Right ventricle myocardium inferior (tissue), 1 donor: ENCODE measurements at regions of chr6 and their contacts with region 1.

Region 1: GRCh38 chr6:109382576-109383437 is 540 bp upstream of the CD164 start:
- DNase-seq: peak; percentile 98
- ATAC-seq: peak; percentile 95

Region 2: DNA sequence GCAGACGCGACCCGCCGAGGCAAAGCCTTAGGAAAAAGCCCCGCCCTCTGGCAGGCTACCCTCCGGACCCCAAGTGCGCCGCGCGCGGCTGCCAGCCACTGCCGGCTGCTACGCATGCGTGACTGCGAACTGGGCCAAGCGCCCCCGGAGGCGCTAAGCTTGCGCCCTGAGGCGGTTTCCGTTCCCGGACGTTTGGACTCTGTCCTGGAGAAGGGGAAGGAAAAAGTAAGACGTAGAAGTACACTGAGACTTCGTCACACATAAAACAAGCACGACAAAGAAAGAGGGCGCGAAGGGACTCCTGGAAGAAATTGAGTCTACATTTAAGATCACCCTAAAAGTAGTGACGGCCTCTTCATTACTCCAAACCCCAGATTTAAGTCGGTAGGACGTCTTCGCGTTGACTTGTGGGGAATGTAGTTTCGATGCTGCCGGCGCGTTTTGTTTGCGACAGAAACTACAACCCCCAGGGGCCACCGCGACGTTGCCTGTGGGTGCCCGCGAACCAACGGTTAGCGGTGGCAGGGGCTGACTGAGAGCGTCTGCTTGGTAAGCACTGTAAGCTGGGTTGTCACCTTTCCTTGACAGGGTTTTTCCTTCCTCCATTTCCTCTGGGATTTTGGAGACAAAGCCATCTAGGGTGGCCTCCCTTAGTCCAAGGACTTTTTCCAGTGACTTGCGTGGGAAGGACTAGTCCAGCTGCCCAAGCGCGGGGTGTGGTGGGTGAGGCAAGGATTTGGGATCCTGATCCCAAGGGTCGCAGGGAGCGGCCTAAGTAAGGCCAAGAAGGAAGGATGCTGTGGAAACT is 287.6 kb before region 1 on chr6 and contains the start of gene CEP57L1:
- intact Hi-C with region 1: loop called (anchors 1 kb)
- DNase-seq: peak; percentile 99
- ATAC-seq: peak; percentile 73
- total RNA-seq, gene CEP57L1: 7.7 TPM

Region 3: GRCh38 chr6:109187399-109188114 is 195.2 kb before region 1 on chr6:
- intact Hi-C with region 1: loop called (anchors 1 kb)
- DNase-seq: peak; percentile 76
- ATAC-seq: no peak

Region 4: GRCh38 chr6:109299776-109300564 is 82.8 kb before region 1 on chr6:
- intact Hi-C with region 1: loop called (anchors 5 kb)
- DNase-seq: no peak
- ATAC-seq: peak; percentile 89

Region 5: DNA sequence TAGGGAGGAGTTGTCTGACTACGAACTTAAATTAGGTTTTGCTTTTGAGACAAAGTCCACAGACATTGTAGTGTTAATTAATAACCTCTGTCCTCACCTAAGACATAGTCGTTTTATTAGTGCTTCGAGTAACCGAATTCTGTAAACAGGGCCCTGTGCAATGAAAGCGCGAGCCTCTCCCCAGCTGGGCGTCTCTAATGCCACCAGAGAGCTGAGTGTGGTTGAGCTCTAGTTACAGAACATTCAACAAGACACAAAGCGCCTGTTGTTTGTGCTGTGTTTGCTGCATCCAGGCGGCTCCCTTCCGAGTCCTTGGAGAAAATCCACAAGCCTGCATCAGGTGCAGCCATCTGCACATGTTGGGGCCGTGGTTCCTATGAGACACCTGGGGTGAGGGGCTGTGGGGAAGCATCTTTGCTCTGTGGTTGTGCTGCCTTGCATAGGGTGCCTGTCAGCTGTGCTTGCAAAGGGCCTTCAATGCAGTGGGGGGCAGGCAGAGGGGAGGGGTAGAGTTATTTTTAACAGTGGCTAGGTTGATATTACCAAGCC is 64.4 kb before region 1 on chr6:
- intact Hi-C with region 1: loop called (anchors 5 kb)
- DNase-seq: no peak
- ATAC-seq: peak; percentile 38

Region 6: GRCh38 chr6:109440331-109441068 is 57.7 kb after region 1 on chr6 and contains the starts of genes PPIL6 and SMPD2:
- intact Hi-C with region 1: loop called (anchors 2 kb)
- DNase-seq: peak; percentile 94
- ATAC-seq: peak; percentile 95
- total RNA-seq, gene PPIL6: 4.5 TPM
- total RNA-seq, gene SMPD2: 4.4 TPM

Region 7: GRCh38 chr6:109690737-109691621 is 308.2 kb after region 1 on chr6 and contains the starts of genes AK9 and FIG4:
- intact Hi-C with region 1: loop called (anchors 5 kb)
- DNase-seq: peak; percentile 97
- ATAC-seq: peak; percentile 99
- total RNA-seq, gene AK9: 11.9 TPM
- total RNA-seq, gene FIG4: 8.4 TPM